H1 (cell line): ENCODE measurements at regions of chr2 and their contacts with region 1.

Region 1: GRCh38 chr2:19347619-19348562 is 10.5 kb downstream of the OSR1 start:
- DNase-seq: peak in 1 of 2 experiments; percentile 97
- H3K4me3 ChIP-seq: peak overlapping the region; percentile 79 to 92 (median 84)
- H3K27ac ChIP-seq: no peak overlapping the region
- H3K4me1 ChIP-seq: peaks cover 0 to 11% (median 3%) of the 10 kb centered on the region in 4 experiments; a peak in 6 of 7 replicates
- H3K27me3 ChIP-seq: peaks cover 39 to 47% (median 45%) of the 10 kb centered on the region in 4 experiments
- CTCF ChIP-seq: no peak
- EP300 ChIP-seq: no peak
- POLR2A ChIP-seq: peak in 1 of 2 experiments; percentile 76; a peak in 2 of 3 replicates
- RAD21 ChIP-seq: no peak; a peak in 1 of 4 replicates

Region 2: GRCh38 chr2:19362755-19363473 is 15.0 kb after region 1 on chr2:
- CTCF ChIA-PET with region 1: interaction called, 104 read pairs
- POLR2A ChIA-PET with region 1: interaction called, 6 read pairs
- DNase-seq: peak in 1 of 2 experiments; percentile 80
- H3K4me3 ChIP-seq: peak overlapping the region in 3 of 4 experiments; percentile 23 to 51 (median 24); a peak in 6 of 8 replicates
- H3K27ac ChIP-seq: no peak overlapping the region
- H3K4me1 ChIP-seq: peaks cover 0 to 23% (median 6%) of the 10 kb centered on the region in 4 experiments; a peak in 6 of 7 replicates
- H3K27me3 ChIP-seq: peaks cover 58 to 81% (median 70%) of the 10 kb centered on the region in 4 experiments
- CTCF ChIP-seq: peak; percentile 64 to 65 (median 65)
- EP300 ChIP-seq: no peak
- POLR2A ChIP-seq: no peak
- RAD21 ChIP-seq: peak; percentile 74 to 76